ENCODE measurements at regions of chr1 and their contacts with region 1.

Region 1: GRCh38 chr1:36369061-36369861 is 16.5 kb downstream of the STK40 start:
- DNase-seq: peak in 1 of 2 donors; percentile 87
- H3K4me3 ChIP-seq: no peak overlapping the region
- H3K27ac ChIP-seq: no peak overlapping the region
- H3K4me1 ChIP-seq: peaks cover 20 to 34% of the 10 kb centered on the region in 2 donors
- H3K27me3 ChIP-seq: no peaks in the 10 kb centered on the region
- CTCF ChIP-seq: peak; percentile 90 to 98 (median 91)

Region 2: GRCh38 chr1:36342481-36343478 is 26.5 kb before region 1 on chr1:
- intact Hi-C with region 1: loop called (anchors 1 kb)
- DNase-seq: peak in 1 of 2 donors; percentile 89
- H3K4me3 ChIP-seq: no peak overlapping the region
- H3K27ac ChIP-seq: peak overlapping the region; percentile 92 to 95
- H3K4me1 ChIP-seq: peaks cover 4 to 12% of the 10 kb centered on the region in 2 donors
- H3K27me3 ChIP-seq: no peaks in the 10 kb centered on the region
- CTCF ChIP-seq: peak; percentile 76 to 89 (median 83)

Region 3: GRCh38 chr1:36350659-36351226 is 18.5 kb before region 1 on chr1:
- intact Hi-C with region 1: loop called (anchors 1 kb)
- DNase-seq: peak in 1 of 2 donors; percentile 86
- H3K4me3 ChIP-seq: peak overlapping the region in 1 of 2 donors; percentile 30
- H3K27ac ChIP-seq: peak overlapping the region; percentile 84 to 89
- H3K4me1 ChIP-seq: peaks cover 39 to 43% of the 10 kb centered on the region in 2 donors
- H3K27me3 ChIP-seq: no peaks in the 10 kb centered on the region
- CTCF ChIP-seq: no peak

Region 4: GRCh38 chr1:36420836-36421664 is 51.8 kb after region 1 on chr1:
- intact Hi-C with region 1: loop called (anchors 1 kb)
- DNase-seq: peak; percentile 58 to 94
- H3K4me3 ChIP-seq: no peak overlapping the region
- H3K27ac ChIP-seq: peak overlapping the region; percentile 1 to 24
- H3K4me1 ChIP-seq: no peaks in the 10 kb centered on the region
- H3K27me3 ChIP-seq: no peaks in the 10 kb centered on the region
- CTCF ChIP-seq: peak; percentile 86 to 94 (median 92)